ENCODE measurements at regions of chr6 and their contacts with region 1.

Region 1: DNA sequence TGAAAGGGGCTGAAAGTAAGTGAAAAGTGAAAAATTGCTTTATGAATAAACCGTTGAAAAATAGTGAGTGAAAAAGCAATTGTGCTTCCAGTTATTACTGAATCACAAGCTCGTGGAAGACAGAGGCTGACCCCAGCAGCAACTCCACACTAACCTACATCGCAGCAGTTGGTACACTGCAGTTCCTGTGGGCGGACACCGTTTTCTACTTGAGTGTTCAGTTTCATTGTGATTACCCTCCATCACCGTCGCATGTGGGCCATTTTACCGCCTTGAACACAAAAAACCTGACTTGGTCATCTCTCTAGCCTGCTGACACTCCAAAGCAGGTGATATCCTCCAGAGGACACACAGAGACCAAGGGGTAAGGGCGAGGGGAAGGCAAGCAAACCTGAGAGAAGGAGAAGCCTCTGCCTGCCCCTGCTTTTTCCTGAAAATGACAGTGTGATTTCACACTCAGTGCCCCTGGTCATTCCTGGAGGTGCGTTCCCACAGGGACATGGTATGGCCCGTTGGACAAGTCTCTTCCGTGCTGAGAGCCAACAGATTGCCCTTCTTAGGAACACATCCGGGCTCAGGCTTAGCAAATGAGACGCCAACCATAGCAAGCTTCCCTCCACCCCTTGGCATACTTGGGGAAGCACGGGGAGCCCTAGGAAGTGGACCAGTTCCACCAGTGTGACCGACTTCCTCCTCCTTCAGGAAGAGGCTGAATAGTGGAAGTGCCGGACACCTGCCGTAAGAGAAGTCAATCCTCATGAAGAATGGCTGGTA is 28.5 kb downstream of the PRDM1 start:
- DNase-seq: peak; percentile 81
- H3K4me3 Mint-ChIP-seq: peak overlapping the region; percentile 36
- H3K27ac Mint-ChIP-seq: peak overlapping the region; percentile 88
- H3K4me1 Mint-ChIP-seq: peaks cover 74% of the 10 kb centered on the region
- H3K27me3 Mint-ChIP-seq: no peaks in the 10 kb centered on the region

Region 2: GRCh38 chr6:106125925-106126435 is 11.3 kb after region 1 on chr6:
- intact Hi-C with region 1: loop called (anchors 1 kb)
- DNase-seq: peak; percentile 76
- H3K4me3 Mint-ChIP-seq: peak overlapping the region; percentile 55
- H3K27ac Mint-ChIP-seq: peak overlapping the region; percentile 89
- H3K4me1 Mint-ChIP-seq: peaks cover 42% of the 10 kb centered on the region
- H3K27me3 Mint-ChIP-seq: peaks cover 2% of the 10 kb centered on the region

Region 3: DNA sequence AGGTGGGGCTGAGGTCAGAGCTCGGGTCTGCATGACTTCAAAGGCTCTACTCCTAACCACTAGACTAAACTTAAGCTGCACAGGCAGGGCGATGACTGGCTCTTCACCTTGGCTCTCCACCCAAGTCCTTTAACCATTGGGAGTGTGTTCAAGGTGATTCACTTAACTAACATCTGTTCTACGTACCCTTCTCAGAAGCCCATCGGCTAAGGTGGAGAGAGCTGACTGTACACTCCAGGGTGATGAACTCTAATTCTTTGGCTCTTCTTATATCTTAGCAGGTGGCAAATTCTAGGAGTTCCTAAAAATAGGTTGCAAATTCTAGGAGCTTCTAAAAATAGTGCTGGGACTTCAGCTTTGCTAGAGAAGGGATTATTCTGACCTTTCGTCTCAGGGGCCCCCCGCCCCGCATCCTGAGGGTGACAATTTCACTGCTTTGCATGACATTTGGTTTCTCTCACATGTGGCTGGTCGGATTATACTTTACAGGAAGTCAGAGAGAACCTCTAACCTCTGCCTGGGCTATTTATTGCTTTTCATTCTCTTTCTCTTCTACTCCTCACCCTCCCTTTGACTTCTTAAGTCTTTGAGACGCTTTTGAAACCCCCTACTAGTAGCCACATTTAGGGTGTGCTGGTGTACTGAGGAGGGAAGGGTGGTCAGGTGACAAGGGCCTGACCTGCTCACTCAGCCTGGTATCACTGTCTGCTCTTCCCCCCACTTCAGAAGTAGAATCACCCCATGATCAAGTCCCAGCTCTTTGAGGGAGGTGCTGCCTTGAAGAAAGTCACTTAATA is 27.0 kb after region 1 on chr6:
- intact Hi-C with region 1: loop called (anchors 1 kb)
- DNase-seq: peak; percentile 85
- H3K4me3 Mint-ChIP-seq: peak overlapping the region; percentile 76
- H3K27ac Mint-ChIP-seq: peak overlapping the region; percentile 96
- H3K4me1 Mint-ChIP-seq: peaks cover 51% of the 10 kb centered on the region
- H3K27me3 Mint-ChIP-seq: no peaks in the 10 kb centered on the region

Region 4: GRCh38 chr6:106184629-106185028 is 70.0 kb after region 1 on chr6:
- intact Hi-C with region 1: loop called (anchors 1 kb)
- DNase-seq: peak; percentile 49
- H3K4me3 Mint-ChIP-seq: no peak overlapping the region
- H3K27ac Mint-ChIP-seq: no peak overlapping the region
- H3K4me1 Mint-ChIP-seq: peaks cover 47% of the 10 kb centered on the region
- H3K27me3 Mint-ChIP-seq: no peaks in the 10 kb centered on the region